ENCODE measurements at regions of chr1 and their contacts with region 1.

Region 1: DNA sequence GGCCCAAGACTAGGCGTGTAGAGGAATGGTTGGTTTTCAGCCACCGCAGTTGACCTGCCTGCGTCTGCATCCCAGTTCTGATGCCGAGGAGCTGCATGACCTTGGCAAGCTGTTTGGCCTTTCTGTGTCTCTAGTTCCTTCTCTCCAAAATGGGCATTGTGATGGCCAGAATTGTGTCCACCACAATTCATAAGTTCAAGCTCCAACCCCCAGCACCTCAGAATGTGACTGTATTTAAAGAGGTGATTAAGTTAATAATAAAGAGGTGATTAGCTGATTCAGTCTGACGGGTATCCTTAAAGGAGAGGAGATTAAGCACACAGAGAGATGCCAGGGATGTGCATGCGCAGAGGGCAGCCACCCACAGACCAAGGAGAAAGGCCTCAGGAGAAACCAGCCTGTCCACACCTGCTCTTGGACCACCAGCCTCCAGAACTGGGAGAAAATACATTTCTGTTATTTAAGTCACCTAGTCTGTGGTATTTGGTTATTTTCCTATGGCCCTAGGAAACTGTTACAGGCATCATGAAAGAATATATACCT is 28.5 kb downstream of the MAB21L3 start:
- DNase-seq: no peak

Region 2: GRCh38 chr1:114620419-114620818 is 1519.2 kb before region 1 on chr1:
- intact Hi-C with region 1: no loop called
- DNase-seq: no peak

Region 3: GRCh38 chr1:116168277-116169097 is 28.8 kb after region 1 on chr1:
- intact Hi-C with region 1: no loop called
- DNase-seq: peak; percentile 40 to 96 (median 79)

Region 4: DNA sequence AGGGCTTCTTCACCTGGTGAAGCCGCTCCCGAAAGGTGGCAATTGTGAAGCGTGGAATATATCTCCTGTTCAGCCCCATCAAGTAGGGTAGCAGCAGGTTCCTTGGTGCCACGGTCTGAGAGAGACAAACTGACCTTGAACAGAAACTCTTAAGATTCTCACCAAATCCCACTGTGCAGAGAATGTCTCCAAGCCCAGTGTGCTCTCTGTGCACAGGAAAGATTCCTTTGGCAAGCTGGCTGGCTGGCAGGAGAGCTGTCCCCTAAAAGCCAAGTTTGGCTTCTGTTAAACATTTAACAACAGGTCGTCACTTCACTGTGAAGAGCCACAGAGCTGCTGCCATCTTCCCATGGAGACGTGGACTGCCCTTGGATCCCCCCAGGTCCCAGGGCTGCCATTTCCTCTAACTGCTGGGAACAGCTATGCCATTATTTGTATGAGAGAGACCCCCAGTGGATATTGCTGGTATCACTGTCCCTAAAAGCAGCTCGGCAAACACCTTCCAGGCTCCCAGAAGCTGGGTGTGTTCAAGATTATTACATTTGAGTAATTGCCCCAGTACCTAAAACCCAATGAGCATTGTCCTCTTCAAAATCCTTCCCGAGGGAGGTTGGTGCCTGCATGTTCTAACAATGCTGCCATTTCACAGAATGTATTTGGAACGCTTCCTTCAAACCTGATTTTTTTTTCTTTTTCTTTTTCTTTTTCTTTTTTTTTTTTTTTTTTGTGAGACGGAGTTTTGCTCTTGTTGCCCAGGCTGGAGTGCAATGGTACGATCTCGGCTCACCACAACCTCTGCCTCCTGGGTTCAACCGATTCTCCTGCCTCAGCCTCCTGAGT is 359.3 kb after region 1 on chr1:
- intact Hi-C with region 1: loop called (anchors 1 kb)
- DNase-seq: peak in 7 of 10 donors; percentile 41 to 92 (median 60)

Region 5: DNA sequence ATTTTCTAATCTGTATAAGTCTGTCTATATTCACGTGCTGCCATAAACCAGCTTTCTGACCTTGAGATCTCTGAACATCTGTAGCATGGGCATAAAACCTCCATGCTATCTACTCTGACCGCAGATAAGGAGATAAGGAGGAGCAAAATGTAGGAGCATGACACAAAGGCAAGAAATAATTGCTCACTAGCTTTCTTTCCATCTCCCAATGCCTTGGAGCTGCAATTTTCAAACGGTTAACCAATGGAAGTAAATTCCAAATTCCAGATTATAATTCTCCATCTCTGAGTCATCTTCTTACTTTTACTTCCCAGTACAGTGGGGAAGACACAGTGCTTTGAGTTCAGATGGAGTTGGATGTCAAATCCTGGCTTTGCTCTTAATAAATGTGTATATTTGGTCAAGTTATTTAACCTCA is 389.5 kb after region 1 on chr1:
- intact Hi-C with region 1: no loop called
- DNase-seq: no peak